Vagina (tissue), 2 donors: ENCODE measurements at regions of chr3 and their contacts with region 1.

Region 1: DNA sequence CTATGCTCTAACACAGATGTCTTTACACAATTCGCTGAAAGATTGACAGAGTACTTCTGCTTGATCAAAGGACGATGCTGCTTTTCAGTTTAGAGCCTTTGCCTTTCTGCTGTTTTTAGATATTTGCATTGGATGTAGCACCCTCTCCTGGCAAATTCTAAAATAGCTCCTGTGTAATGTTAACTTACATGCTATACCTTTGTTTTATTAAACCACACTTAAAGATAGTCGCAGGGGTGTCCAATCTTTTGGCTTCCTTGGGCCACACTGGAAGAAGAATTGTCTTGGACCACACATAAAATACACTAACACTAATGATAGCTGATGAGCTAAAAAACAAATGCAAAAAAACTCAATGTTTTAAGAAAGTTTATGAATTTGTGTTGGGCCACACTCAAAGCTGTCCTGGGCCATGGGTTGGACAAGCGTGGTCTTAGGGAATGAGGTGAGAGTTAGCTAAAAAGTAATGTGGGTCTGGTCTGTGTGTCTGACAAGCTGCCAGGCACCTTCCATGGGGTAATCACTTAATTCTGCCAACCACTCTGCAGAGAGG is 62.9 kb downstream of the ATG7 start:
- DNase-seq: no peak
- H3K4me3 ChIP-seq: no peak overlapping the region
- H3K27ac ChIP-seq: no peak overlapping the region
- H3K4me1 ChIP-seq: no peaks in the 10 kb centered on the region
- H3K27me3 ChIP-seq: no peaks in the 10 kb centered on the region
- CTCF ChIP-seq: peak; percentile 61 to 74 (median 67)
- POLR2A ChIP-seq: no peak

Region 2: GRCh38 chr3:11155341-11156025 is 179.6 kb before region 1 on chr3:
- intact Hi-C with region 1: loop called (anchors 10 kb)
- DNase-seq: peak in 1 of 2 donors; percentile 94
- H3K4me3 ChIP-seq: peak overlapping the region; percentile 58 to 64
- H3K27ac ChIP-seq: peak overlapping the region; percentile 86
- H3K4me1 ChIP-seq: peaks cover 38% of the 10 kb centered on the region
- H3K27me3 ChIP-seq: no peaks in the 10 kb centered on the region
- CTCF ChIP-seq: peak in 2 of 3 experiments; percentile 46 to 66
- POLR2A ChIP-seq: no peak

Region 3: GRCh38 chr3:11367143-11367693 is 32.1 kb after region 1 on chr3:
- intact Hi-C with region 1: no loop called
- DNase-seq: no peak
- H3K4me3 ChIP-seq: no peak overlapping the region
- H3K27ac ChIP-seq: peak overlapping the region; percentile 59
- H3K4me1 ChIP-seq: peaks cover 26% of the 10 kb centered on the region
- H3K27me3 ChIP-seq: no peaks in the 10 kb centered on the region
- CTCF ChIP-seq: no peak
- POLR2A ChIP-seq: no peak